ENCODE measurements at regions of chr4 and their contacts with region 1.

Region 1: GRCh38 chr4:87363567-87363966 is 27.4 kb downstream of the HSD17B11 start:
- DNase-seq: no peak
- ATAC-seq: no peak
- H3K4me3 ChIP-seq: no peak overlapping the region
- H3K27ac ChIP-seq: no peak overlapping the region
- H3K4me1 ChIP-seq: no peaks in the 10 kb centered on the region
- H3K27me3 ChIP-seq: no peaks in the 10 kb centered on the region
- CTCF ChIP-seq: no peak
- POLR2A ChIP-seq: no peak
- RAD21 ChIP-seq: no peak

Region 2: GRCh38 chr4:88204882-88205281 is 841.3 kb after region 1 on chr4:
- CTCF ChIA-PET with region 1: no interaction called
- POLR2A ChIA-PET with region 1: no interaction called
- RAD21 ChIA-PET with region 1: no interaction called
- intact Hi-C with region 1: loop called (anchors 10 kb)
- DNase-seq: no peak
- ATAC-seq: no peak
- H3K4me3 ChIP-seq: no peak overlapping the region
- H3K27ac ChIP-seq: no peak overlapping the region
- H3K4me1 ChIP-seq: no peaks in the 10 kb centered on the region
- H3K27me3 ChIP-seq: no peaks in the 10 kb centered on the region
- CTCF ChIP-seq: no peak
- POLR2A ChIP-seq: no peak
- RAD21 ChIP-seq: no peak

Measured in HCT116 (cell line).